Heart right ventricle (tissue), 16 donors: ENCODE measurements at regions of chr10 and their contacts with region 1.

Region 1: DNA sequence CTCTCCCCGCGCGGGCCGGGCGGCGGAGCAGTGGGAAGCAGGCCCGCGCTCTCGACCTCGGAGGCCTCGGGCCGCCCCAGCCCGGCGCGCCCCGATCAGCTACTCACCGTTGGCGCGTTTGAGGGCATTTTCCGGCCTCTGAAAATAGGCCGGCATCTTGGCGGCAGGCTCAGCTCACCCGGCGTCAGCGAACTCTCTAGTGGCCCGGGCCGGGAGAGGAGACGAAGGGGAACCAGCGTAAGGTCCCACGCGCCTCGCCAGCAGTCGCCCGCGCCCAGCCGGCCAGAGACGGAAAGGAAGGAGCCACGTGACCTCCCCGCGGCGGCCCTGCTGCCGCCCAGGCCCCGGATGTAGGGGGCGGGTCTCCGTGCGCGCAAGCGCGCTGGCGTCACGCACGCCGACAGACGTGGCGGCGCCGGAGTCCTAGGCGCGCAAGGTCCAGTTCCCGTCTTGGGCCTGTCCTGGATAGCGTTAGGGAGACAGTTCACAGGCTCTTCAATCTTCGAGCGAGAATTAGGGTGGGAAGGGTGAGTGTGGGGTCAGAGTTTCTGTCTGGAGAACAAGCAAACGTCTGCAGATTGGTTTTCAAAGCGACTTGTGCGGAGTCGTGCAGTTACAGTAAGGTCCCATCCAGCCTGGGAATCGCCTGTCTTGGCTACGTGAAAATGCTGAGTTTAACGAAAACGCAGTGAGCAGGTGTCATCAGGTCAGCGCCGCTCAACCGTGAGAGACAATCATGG is at the start of gene EIF3A:
- DNase-seq: peak; percentile 92 to 95
- ATAC-seq: peak; percentile 97 to 98 (median 98)
- H3K4me3 ChIP-seq: peak within 1 kb of the TSS; percentile 66 to 99 (median 95)
- H3K27ac ChIP-seq: peak within 1 kb of the TSS; percentile 91 to 99 (median 98)
- H3K4me1 ChIP-seq: peaks cover 5 to 52% (median 37%) of the 10 kb centered on the region in 9 donors
- H3K27me3 ChIP-seq: no peaks in the 10 kb centered on the region
- CTCF ChIP-seq: no peak
- total RNA-seq, gene EIF3A: 94.8 to 139 (median 126) TPM

Region 2: DNA sequence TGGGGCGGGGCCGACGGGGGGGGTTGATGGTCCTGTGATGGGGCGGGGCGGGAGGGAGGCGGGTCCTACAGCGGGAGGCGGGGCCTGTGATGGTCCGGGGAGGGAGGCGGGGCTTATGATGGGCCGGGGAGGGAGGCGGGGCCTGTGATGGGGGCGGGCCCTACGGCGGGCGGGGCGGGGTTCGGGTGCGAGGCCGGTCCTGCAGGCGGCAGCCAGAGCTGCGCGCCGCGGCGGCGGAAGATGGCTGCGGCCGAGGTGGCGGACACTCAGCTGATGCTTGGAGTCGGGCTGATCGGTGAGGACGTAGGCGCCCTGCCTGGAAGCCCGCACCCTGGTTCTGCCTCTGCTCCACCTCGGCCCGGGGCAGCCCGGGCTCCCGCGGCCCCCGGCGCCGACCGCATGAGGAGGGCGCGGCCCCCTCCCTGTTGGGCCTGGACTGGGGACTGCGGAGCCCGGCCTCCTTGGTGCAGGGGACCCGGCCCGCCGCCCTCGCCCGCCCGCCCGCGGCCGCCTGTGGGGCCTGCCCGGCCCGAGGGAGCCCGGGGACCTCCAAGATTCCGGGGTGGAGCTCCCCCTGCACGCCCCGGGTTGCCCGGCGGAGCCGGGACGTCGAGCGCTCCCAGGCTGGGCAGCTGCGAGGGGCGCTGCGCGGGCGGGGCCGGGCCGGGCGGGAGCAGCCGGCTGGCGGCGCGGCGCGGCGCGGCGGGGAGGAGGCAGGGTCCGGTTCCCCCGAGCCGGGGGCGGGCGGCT is 23.4 kb after region 1 on chr10 and contains the start of gene DENND10:
- intact Hi-C with region 1: loop called in 2 of 10 experiments (anchors 2 kb)
- DNase-seq: peak; percentile 84 to 86
- ATAC-seq: peak; percentile 93 to 97 (median 96)
- H3K4me3 ChIP-seq: peak within 1 kb of the TSS; percentile 67 to 90 (median 79)
- H3K27ac ChIP-seq: peak within 1 kb of the TSS in 9 of 10 donors; percentile 59 to 87 (median 81)
- H3K4me1 ChIP-seq: peaks cover 0 to 28% (median 19%) of the 10 kb centered on the region in 9 donors
- H3K27me3 ChIP-seq: no peaks in the 10 kb centered on the region
- CTCF ChIP-seq: peak in 2 of 9 donors; percentile 20 to 30
- total RNA-seq, gene DENND10: 17.1 to 28.4 (median 23.4) TPM

Region 3: DNA sequence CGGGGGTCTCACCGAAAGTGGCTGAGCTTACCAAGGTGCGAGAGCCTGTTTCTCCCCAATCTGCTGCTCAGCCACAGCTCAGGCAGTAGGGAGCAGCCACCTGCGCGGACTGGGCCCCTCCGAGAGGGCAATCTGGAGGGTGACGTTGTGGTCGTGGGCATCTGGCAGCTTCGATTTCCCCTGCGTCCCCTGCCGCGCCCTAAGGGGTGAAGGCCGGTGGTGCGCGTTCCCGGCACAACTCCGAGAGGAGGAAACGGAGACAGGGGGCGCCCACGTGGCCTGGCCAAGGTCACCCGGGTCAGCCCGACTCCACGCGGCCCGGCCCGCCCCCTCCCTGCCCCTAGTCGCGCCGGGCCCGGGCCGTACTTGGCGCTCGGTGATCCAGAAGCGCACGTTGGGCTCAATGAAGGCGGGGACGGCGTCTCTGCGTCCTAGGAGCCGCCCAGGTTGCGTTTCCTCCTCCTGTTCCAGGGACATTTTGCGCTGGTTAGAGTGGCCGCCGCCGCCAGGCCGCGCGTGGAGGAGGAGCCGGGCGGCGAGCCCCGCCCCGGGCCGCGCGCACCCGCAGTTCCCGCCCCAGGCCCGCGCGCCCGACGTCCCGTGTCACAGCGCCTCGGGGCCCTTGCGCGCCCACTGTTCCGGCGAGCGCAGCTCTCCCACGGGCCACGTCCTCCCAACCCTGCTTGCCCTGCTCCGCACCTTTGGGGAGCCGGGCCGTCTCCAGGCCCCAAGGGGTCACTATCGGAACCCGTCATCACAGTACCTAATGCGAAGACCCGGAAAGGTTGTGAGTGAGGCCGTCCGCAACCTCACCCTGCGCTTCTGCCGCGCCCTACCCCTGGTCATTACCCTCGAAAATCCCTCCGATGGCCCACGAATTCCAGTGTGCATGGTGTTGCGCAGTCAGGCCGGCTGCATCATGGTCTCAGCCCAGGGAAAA is 84.8 kb after region 1 on chr10 and contains the start of gene SFXN4:
- intact Hi-C with region 1: loop called in 2 of 10 experiments (anchors 1 to 5 kb)
- DNase-seq: peak; percentile 80 to 84
- ATAC-seq: peak; percentile 94 to 98 (median 96)
- H3K4me3 ChIP-seq: peak within 1 kb of the TSS; percentile 36 to 98 (median 85)
- H3K27ac ChIP-seq: peak within 1 kb of the TSS; percentile 39 to 96 (median 96)
- H3K4me1 ChIP-seq: peaks cover 0 to 32% (median 19%) of the 10 kb centered on the region in 9 donors
- H3K27me3 ChIP-seq: no peaks in the 10 kb centered on the region
- CTCF ChIP-seq: peak in 3 of 9 donors; percentile 17 to 33 (median 29)
- total RNA-seq, gene SFXN4: 32.3 to 53.1 (median 43.3) TPM

Region 4: GRCh38 chr10:119178372-119179119 is 97.9 kb after region 1 on chr10 and contains the start of gene PRDX3:
- intact Hi-C with region 1: loop called in 1 of 10 experiments (anchors 5 kb)
- DNase-seq: peak; percentile 93 to 95
- ATAC-seq: peak; percentile 99 to 100 (median 99)
- H3K4me3 ChIP-seq: peak within 1 kb of the TSS; percentile 59 to 90 (median 76)
- H3K27ac ChIP-seq: peak within 1 kb of the TSS; percentile 80 to 96 (median 90)
- H3K4me1 ChIP-seq: peaks cover 0 to 29% (median 20%) of the 10 kb centered on the region in 9 donors
- H3K27me3 ChIP-seq: no peaks in the 10 kb centered on the region
- CTCF ChIP-seq: peak in 7 of 9 donors; percentile 21 to 54 (median 29)
- total RNA-seq, gene PRDX3: 217 to 323 (median 286) TPM